A549 (cell line): ENCODE measurements at regions of chr2 and their contacts with region 1.

Region 1: GRCh38 chr2:199985625-199986207 is 30.3 kb downstream of the MAIP1 start:
- DNase-seq: peak; percentile 31 to 84
- ATAC-seq: peak; percentile 82 to 98
- H3K4me3 ChIP-seq: no peak overlapping the region
- H3K27ac ChIP-seq: peak overlapping the region; percentile 33 to 74; a peak in 4 of 6 replicates
- H3K4me1 ChIP-seq: no peaks in the 10 kb centered on the region
- CTCF ChIP-seq: peak; percentile 57
- EP300 ChIP-seq: no peak
- POLR2A ChIP-seq: no peak
- RAD21 ChIP-seq: peak; percentile 57 to 76

Region 2: GRCh38 chr2:199875400-199875799 is 110.3 kb before region 1 on chr2:
- CTCF ChIA-PET with region 1: no interaction called
- POLR2A ChIA-PET with region 1: no interaction called
- DNase-seq: no peak
- ATAC-seq: no peak
- H3K4me3 ChIP-seq: no peak overlapping the region
- H3K27ac ChIP-seq: no peak overlapping the region
- H3K4me1 ChIP-seq: no peaks in the 10 kb centered on the region
- CTCF ChIP-seq: no peak
- EP300 ChIP-seq: no peak
- POLR2A ChIP-seq: no peak
- RAD21 ChIP-seq: no peak

Region 3: DNA sequence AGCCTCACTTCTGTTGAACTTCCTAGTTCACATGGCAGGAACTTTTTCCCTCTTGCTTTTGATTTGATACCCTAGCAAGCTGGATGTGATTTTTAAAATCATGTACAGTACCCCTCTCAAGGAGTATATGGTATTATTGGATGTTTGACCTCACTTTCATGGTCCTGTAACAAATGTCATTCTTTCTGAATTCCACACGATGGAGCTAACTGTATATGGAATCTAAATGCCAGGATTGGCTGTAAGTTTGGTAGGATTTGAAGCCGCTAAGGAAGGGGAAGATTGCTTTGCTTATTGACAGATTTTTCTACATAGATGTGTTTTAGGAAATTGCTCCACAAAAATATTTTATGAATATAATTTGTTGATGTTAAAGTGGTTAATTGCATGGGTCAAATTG is 12.0 kb before region 1 on chr2:
- CTCF ChIA-PET with region 1: interaction called, 16 read pairs
- POLR2A ChIA-PET with region 1: no interaction called
- DNase-seq: peak; percentile 15 to 46
- ATAC-seq: peak; percentile 70 to 81; a peak in 5 of 6 replicates
- H3K4me3 ChIP-seq: no peak overlapping the region
- H3K27ac ChIP-seq: peak overlapping the region in 1 of 2 experiments; percentile 80; a peak in 3 of 6 replicates
- H3K4me1 ChIP-seq: peaks cover 28% of the 10 kb centered on the region
- CTCF ChIP-seq: peak; percentile 82
- EP300 ChIP-seq: no peak
- POLR2A ChIP-seq: no peak
- RAD21 ChIP-seq: peak; percentile 84 to 87

Region 4: DNA sequence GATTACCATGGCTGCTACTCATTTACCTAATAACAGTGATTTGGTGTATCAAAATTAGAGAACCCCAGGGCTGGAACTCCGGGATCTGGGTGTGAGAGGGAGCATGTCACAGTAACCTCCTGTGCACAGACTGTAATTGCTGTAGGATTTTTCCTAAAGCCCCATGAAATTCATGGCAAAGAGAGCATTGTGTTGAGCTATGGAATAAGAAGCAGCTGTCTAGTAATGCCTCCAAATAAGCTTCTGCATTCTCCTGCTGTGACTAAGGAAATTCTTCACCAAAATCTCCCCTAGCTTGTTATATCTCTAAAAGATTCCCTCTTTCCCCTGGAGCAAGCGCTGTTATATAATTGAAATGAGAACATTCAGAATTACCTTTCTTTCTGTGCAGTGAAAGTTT is 162.7 kb after region 1 on chr2:
- CTCF ChIA-PET with region 1: no interaction called
- POLR2A ChIA-PET with region 1: no interaction called
- DNase-seq: no peak
- ATAC-seq: no peak
- H3K4me3 ChIP-seq: no peak overlapping the region
- H3K27ac ChIP-seq: no peak overlapping the region
- H3K4me1 ChIP-seq: no peaks in the 10 kb centered on the region
- CTCF ChIP-seq: no peak
- EP300 ChIP-seq: no peak
- POLR2A ChIP-seq: no peak
- RAD21 ChIP-seq: no peak